Ovary (tissue), 10 donors: ENCODE measurements at regions of chr6 and their contacts with region 1.

Region 1: DNA sequence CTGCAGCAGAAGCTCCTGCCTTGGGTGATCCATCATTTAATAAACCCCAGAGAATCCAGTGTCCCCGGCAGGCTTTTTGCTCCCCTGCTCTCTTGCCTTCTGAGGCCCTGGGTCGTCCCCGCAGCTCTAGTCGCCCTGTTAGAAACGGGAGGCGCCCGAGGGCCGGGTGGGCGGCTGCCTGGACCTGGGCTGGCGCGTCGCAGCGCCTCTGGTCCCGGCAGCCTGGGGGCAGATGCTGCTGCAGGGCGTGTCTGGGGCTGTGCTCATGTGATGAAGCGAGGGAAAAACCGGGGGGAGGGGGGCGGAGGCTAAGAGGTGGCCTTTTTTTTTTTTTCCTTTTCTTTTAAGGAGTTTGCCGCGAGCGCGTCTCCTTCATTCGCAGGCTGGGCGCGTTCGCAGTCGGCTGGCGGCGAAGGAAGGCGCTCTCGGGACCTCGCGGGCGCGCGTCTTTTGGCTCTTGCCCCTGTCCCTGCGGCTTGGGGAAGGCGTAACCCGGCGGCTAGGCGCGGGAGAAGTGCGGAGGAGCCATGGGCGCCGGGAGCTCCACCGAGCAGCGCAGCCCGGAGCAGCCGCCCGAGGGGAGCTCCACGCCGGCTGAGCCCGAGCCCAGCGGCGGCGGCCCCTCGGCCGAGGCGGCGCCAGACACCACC is 394 bp downstream of the AKAP12 start:
- DNase-seq: peak; percentile 85 to 94 (median 92)
- H3K4me3 ChIP-seq: peak overlapping the region; percentile 66
- H3K27ac ChIP-seq: peak overlapping the region; percentile 91 to 98
- H3K4me1 ChIP-seq: peaks cover 3% of the 10 kb centered on the region
- H3K27me3 ChIP-seq: no peaks in the 10 kb centered on the region
- CTCF ChIP-seq: no peak
- EP300 ChIP-seq: no peak
- POLR2A ChIP-seq: peak; percentile 68

Region 2: DNA sequence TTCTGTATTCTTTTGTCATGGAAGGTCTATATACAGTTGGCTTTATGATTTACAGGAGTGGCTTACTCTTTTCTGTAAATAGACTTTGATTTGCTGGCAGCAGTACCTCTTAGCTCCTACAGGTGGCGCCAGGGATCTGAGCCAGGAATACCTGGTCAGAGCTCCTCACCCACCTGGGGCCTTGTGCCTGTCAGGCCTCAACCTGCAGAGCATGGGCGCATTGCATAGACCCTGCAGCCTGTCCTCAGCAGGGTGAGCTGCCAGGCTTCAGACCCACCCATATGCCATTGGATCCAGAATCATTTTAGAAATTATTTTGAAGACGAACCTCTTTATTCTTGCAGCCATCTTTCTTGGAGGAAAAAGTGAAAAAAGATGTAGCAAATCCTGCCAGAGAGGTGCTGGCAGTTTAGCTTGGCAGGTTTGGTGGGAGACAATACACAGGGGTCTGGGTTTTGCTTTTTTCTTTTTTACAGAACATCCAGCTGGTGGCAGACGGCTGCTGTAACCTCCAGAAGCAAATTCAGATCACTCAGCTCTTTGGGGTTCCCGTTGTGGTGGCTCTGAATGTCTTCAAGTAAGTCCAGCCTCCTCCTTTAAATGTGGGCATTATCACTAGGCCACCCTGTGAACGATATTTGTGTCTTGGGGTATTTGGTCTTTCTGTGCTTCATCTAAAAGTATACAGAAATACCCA is 225.6 kb before region 1 on chr6:
- intact Hi-C with region 1: loop called in 2 of 4 experiments (anchors 10 kb)
- DNase-seq: peak; percentile 60 to 82 (median 74)
- H3K4me3 ChIP-seq: no peak overlapping the region
- H3K27ac ChIP-seq: no peak overlapping the region
- H3K4me1 ChIP-seq: peaks cover 4% of the 10 kb centered on the region
- H3K27me3 ChIP-seq: no peaks in the 10 kb centered on the region
- CTCF ChIP-seq: peak; percentile 79 to 95 (median 95)
- EP300 ChIP-seq: no peak
- POLR2A ChIP-seq: no peak

Region 3: GRCh38 chr6:151300267-151300991 is 60.3 kb after region 1 on chr6:
- intact Hi-C with region 1: loop called in 1 of 4 experiments (anchors 10 kb)
- DNase-seq: peak in 1 of 5 donors; percentile 30
- H3K4me3 ChIP-seq: no peak overlapping the region
- H3K27ac ChIP-seq: peak overlapping the region in 1 of 2 donors; percentile 71
- H3K4me1 ChIP-seq: peaks cover 14% of the 10 kb centered on the region
- H3K27me3 ChIP-seq: no peaks in the 10 kb centered on the region
- CTCF ChIP-seq: no peak
- EP300 ChIP-seq: no peak
- POLR2A ChIP-seq: no peak

Region 4: GRCh38 chr6:151317103-151317994 is 77.2 kb after region 1 on chr6:
- intact Hi-C with region 1: loop called in 1 of 4 experiments (anchors 10 kb)
- DNase-seq: no peak
- H3K4me3 ChIP-seq: no peak overlapping the region
- H3K27ac ChIP-seq: peak overlapping the region; percentile 13 to 24
- H3K4me1 ChIP-seq: peaks cover 7% of the 10 kb centered on the region
- H3K27me3 ChIP-seq: no peaks in the 10 kb centered on the region
- CTCF ChIP-seq: no peak
- EP300 ChIP-seq: no peak
- POLR2A ChIP-seq: no peak

Region 5: GRCh38 chr6:151323791-151324487 is 83.8 kb after region 1 on chr6:
- intact Hi-C with region 1: loop called in 2 of 4 experiments (anchors 2 to 10 kb)
- DNase-seq: peak; percentile 86 to 93 (median 93)
- H3K4me3 ChIP-seq: no peak overlapping the region
- H3K27ac ChIP-seq: peak overlapping the region; percentile 12 to 64
- H3K4me1 ChIP-seq: peaks cover 8% of the 10 kb centered on the region
- H3K27me3 ChIP-seq: no peaks in the 10 kb centered on the region
- CTCF ChIP-seq: peak; percentile 96 to 98 (median 97)
- EP300 ChIP-seq: peak; percentile 74
- POLR2A ChIP-seq: no peak